ENCODE measurements at regions of chr10 and their contacts with region 1.

Region 1: DNA sequence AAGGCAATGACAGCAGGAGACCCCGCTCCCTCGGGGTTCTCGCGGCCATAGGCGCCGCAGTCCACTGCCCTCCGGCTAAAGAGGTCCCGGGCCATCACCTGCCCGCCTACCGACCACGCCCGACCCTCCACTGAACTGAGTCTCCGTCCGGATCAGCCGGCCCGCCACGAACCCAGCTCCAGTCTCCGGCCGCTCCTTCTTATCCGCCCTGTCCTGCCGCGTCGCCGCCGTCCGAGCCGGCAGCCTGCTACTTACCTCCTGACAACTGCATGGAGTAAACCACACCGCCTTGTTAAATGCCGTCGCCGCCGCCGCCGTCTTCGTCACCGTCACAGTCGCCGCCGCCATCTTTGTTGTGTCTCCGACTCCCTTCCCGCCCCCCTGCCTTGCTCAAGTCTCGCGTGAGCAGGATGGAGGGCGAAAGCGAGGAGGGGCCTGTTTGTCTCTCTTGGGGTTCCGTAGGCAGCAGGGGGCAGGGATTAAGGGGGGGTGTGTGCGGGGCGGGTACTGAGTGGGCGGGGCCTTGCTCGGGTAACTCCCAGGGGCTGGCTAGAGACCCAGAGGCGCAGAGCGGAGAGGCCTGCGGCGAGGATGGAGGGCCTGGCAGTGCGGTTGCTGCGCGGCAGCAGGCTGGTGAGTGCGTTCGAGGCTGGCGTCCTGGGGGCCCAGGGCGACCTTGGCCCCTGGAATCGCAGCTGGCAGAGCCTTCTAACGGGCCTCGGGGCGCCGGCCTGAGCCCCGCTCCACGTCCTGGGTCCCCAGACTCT is at the starts of genes ACADSB and IKZF5:
- DNase-seq: peak; percentile 98
- H3K4me3 Mint-ChIP-seq: peak within 1 kb of the TSS; percentile 99
- H3K27ac Mint-ChIP-seq: peak within 1 kb of the TSS; percentile 96
- H3K4me1 Mint-ChIP-seq: peaks cover 47% of the 10 kb centered on the region
- H3K27me3 Mint-ChIP-seq: no peaks in the 10 kb centered on the region
- total RNA-seq, gene ACADSB: 22.1 to 25.1 TPM
- total RNA-seq, gene IKZF5: 14.5 to 14.8 TPM

Region 2: DNA sequence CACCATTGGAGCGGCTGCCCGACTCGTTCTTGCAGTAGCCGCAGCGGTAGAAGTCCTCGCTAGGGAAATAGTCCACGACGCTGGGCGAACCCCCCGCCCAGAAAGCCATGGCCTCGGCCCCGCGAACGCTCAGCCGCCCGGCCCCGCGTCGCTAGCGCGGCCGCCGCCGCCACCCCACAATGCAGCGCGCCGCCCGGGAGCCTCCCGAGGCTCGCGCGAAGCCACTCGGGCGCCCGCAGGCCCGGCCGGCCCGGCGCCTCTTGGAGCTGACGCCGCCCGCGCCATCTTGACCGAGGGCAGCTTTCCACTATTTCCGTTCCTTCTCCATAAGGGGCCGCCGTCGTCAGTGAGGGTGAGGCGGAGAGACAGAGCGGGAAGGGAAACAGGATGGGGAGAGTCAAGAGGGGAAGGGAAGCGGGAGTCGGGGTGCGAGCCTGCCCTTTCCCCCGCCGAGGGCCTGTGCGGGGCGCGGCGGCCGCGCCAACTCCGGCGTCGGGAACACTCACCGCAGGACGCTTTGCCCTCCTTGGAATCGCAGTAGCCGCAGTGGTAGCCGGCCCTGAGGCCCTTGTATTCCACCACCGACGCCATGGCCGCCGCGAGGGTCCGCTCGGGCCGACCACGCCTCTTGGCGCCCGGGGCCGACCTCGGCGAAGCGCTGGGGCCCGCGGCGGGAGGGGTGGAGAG is 1080.6 kb before region 1 on chr10 and contains the start of gene ATE1:
- CTCF ChIA-PET with region 1: no interaction called
- POLR2A ChIA-PET with region 1: no interaction called
- intact Hi-C with region 1: loop called (anchors 2 kb)
- DNase-seq: peak; percentile 87
- H3K4me3 Mint-ChIP-seq: peak within 1 kb of the TSS; percentile 94
- H3K27ac Mint-ChIP-seq: peak within 1 kb of the TSS; percentile 95
- H3K4me1 Mint-ChIP-seq: peaks cover 27% of the 10 kb centered on the region
- H3K27me3 Mint-ChIP-seq: no peaks in the 10 kb centered on the region
- total RNA-seq, gene ATE1: 19.4 to 23.1 TPM

Region 3: GRCh38 chr10:122879339-122880273 is 129.0 kb before region 1 on chr10 and contains the start of gene FAM24B:
- CTCF ChIA-PET with region 1: interaction called, 5 read pairs
- POLR2A ChIA-PET with region 1: no interaction called
- intact Hi-C with region 1: loop called (anchors 1 kb)
- DNase-seq: peak; percentile 95
- H3K4me3 Mint-ChIP-seq: peak within 1 kb of the TSS; percentile 86
- H3K27ac Mint-ChIP-seq: peak within 1 kb of the TSS; percentile 82
- H3K4me1 Mint-ChIP-seq: peaks cover 52% of the 10 kb centered on the region
- H3K27me3 Mint-ChIP-seq: no peaks in the 10 kb centered on the region
- total RNA-seq, gene FAM24B: 7.2 to 8.1 TPM

Region 4: DNA sequence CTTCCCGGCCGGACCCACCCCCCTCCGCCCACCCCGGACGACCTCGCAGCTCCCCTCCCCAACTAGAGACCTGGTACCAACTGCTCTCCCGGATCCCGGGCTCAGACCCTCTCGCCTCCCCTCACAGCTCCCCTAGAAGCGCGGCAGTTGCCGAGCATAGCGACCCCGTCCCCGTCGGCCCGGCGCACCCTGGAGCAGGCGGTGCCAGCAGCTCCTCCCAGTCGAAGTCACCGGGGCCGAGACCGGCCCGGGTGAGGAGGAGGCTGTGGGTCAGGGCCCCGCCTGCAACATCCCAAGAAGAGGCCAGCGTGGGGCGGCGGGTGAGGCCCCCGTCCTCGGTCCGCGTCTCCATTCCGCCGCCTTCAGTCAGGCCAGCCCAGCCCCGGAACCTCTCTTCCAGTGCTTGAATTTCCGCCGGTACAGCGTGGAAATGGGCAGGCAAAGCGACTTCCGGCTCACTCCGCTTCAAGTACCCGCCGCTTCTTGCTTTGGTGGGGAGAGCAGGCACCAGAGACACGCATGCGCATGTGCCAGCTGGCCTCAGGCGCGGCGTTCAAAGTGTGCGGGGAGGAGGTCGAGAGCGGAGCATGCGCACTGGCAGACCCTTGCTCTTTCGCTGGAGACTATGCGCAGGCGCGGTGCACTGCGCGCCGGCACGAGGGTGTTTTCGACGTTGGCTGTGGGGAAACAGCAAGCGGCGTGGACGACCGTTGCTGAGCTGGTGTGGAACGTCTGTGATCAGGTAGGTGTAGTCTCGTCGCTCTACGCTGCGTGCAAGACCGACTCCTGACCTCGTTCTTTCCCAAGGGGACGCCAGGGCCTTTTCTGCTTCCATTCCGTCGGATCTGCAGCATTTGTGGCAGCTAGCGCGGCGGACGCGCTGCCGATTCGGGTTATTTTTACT is 54.5 kb before region 1 on chr10 and contains the start of gene C10orf88:
- CTCF ChIA-PET with region 1: interaction called, 3 read pairs
- POLR2A ChIA-PET with region 1: interaction called, 5 read pairs
- intact Hi-C with region 1: loop called (anchors 1 kb)
- DNase-seq: peak; percentile 98
- H3K4me3 Mint-ChIP-seq: peak within 1 kb of the TSS; percentile 82
- H3K27ac Mint-ChIP-seq: peak within 1 kb of the TSS; percentile 80
- H3K4me1 Mint-ChIP-seq: peaks cover 30% of the 10 kb centered on the region
- H3K27me3 Mint-ChIP-seq: peaks cover 1% of the 10 kb centered on the region
- total RNA-seq, gene C10orf88: 8.3 to 9.2 TPM

Region 5: DNA sequence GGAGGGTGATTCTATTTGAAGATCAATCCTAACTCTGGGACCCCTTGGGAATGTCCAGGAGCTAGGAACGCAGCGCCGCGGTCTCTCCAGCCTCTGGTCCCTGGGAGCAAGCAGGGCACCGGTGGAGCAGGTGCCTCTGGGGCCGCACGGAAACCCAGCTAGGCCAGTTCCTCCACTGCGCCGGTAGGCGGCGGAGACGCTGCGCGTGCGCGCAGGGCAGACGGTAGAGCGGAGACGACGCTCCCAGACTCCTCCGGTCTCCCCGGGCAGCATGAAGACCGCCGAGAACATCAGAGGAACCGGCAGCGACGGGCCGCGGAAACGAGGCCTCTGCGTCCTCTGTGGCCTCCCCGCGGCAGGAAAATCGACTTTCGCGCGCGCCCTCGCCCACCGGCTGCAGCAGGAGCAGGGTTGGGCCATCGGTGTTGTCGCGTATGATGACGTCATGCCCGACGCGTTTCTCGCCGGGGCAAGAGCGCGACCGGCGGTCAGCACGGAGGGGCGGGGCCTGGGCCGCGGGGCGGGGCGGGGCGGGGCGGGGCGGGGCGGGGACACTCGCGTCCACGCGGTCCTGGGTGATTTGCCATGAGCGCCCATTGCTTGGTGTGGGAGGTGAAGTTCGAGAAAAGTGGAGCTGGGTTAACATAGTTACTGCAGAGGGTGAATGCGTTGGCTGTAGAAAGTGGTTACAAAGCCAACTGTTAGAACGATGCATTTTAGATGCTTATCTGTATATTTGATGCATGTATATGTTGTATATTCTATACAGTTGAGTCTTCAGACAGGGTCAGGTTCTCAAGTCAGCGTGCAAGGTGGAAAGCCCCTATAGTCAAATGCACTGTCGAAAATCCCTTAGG is 28.2 kb before region 1 on chr10 and contains the start of gene PSTK:
- CTCF ChIA-PET with region 1: interaction called, 13 read pairs
- POLR2A ChIA-PET with region 1: interaction called, 34 read pairs
- intact Hi-C with region 1: loop called (anchors 1 kb)
- DNase-seq: peak; percentile 91
- H3K4me3 Mint-ChIP-seq: peak within 1 kb of the TSS; percentile 82
- H3K27ac Mint-ChIP-seq: peak within 1 kb of the TSS; percentile 94
- H3K4me1 Mint-ChIP-seq: peaks cover 16% of the 10 kb centered on the region
- H3K27me3 Mint-ChIP-seq: no peaks in the 10 kb centered on the region
- total RNA-seq, gene PSTK: 3.2 to 3.4 TPM